ENCODE measurements at regions of chr2 and their contacts with region 1.

Region 1: GRCh38 chr2:174835797-174836255 is 71.6 kb upstream of the CHRNA1 start:
- DNase-seq: peak; percentile 67
- H3K4me3 Mint-ChIP-seq: no peak overlapping the region
- H3K27ac Mint-ChIP-seq: peak overlapping the region; percentile 82
- H3K4me1 Mint-ChIP-seq: peaks cover 36% of the 10 kb centered on the region
- H3K27me3 Mint-ChIP-seq: no peaks in the 10 kb centered on the region

Region 2: GRCh38 chr2:174778085-174778981 is 57.5 kb before region 1 on chr2:
- CTCF ChIA-PET with region 1: no interaction called
- POLR2A ChIA-PET with region 1: no interaction called
- intact Hi-C with region 1: loop called (anchors 5 kb)
- DNase-seq: peak; percentile 91
- H3K4me3 Mint-ChIP-seq: peak overlapping the region; percentile 17
- H3K27ac Mint-ChIP-seq: peak overlapping the region; percentile 79
- H3K4me1 Mint-ChIP-seq: peaks cover 42% of the 10 kb centered on the region
- H3K27me3 Mint-ChIP-seq: no peaks in the 10 kb centered on the region

Region 3: GRCh38 chr2:174797781-174798276 is 38.0 kb before region 1 on chr2:
- CTCF ChIA-PET with region 1: interaction called, 8 read pairs
- POLR2A ChIA-PET with region 1: interaction called, 19 read pairs
- intact Hi-C with region 1: loop called (anchors 1 kb)
- DNase-seq: no peak
- H3K4me3 Mint-ChIP-seq: no peak overlapping the region
- H3K27ac Mint-ChIP-seq: no peak overlapping the region
- H3K4me1 Mint-ChIP-seq: peaks cover 24% of the 10 kb centered on the region
- H3K27me3 Mint-ChIP-seq: no peaks in the 10 kb centered on the region

Region 4: DNA sequence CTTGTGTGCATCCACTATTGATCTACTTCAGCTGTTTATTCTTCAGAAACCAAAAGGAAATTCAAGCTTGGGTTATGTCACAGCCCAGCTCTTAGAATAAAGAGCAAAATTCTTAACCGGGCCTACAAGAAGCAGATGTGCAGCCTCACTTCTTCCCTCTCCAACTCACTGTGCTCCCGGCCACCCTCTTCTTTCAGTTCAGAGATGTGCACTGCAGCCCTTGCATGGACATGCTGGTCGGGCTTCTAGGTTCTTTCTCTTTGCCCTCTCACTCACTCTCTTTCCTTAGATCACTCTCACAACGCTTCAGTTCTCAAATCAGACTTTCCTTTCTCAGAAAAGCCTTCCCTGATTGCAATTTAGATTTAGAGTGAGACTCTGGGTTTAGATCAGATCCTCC is 65.2 kb after region 1 on chr2:
- CTCF ChIA-PET with region 1: no interaction called
- POLR2A ChIA-PET with region 1: no interaction called
- intact Hi-C with region 1: loop called (anchors 5 kb)
- DNase-seq: peak; percentile 43
- H3K4me3 Mint-ChIP-seq: peak overlapping the region; percentile 3
- H3K27ac Mint-ChIP-seq: peak overlapping the region; percentile 0
- H3K4me1 Mint-ChIP-seq: peaks cover 22% of the 10 kb centered on the region
- H3K27me3 Mint-ChIP-seq: no peaks in the 10 kb centered on the region

Region 5: GRCh38 chr2:174965992-174966744 is 130.3 kb after region 1 on chr2:
- CTCF ChIA-PET with region 1: no interaction called
- POLR2A ChIA-PET with region 1: no interaction called
- intact Hi-C with region 1: loop called (anchors 1 kb)
- DNase-seq: no peak
- H3K4me3 Mint-ChIP-seq: no peak overlapping the region
- H3K27ac Mint-ChIP-seq: no peak overlapping the region
- H3K4me1 Mint-ChIP-seq: peaks cover 10% of the 10 kb centered on the region
- H3K27me3 Mint-ChIP-seq: peaks cover 5% of the 10 kb centered on the region

Region 6: DNA sequence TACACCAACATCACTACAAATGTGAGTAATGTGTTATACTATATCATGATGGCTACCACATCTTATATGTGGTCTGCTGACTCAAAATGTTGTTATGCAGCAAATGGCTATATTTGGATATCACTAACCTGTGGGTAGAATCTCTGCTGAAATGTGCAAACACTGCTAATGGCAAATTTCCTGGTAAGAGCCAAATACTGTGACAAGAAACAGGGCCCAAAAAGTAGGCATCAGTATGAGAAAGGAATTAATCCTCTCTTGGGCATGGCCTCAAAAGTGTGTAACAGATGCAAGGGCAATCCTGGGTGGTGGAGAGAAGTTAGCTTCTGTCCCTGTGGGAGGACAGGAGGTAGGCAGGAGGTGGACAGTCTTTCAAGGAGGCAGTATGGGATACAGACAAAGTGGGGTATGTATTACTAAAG is 318.8 kb after region 1 on chr2:
- CTCF ChIA-PET with region 1: no interaction called
- POLR2A ChIA-PET with region 1: no interaction called
- intact Hi-C with region 1: loop called (anchors 5 kb)
- DNase-seq: no peak
- H3K4me3 Mint-ChIP-seq: no peak overlapping the region
- H3K27ac Mint-ChIP-seq: peak overlapping the region; percentile 75
- H3K4me1 Mint-ChIP-seq: peaks cover 46% of the 10 kb centered on the region
- H3K27me3 Mint-ChIP-seq: no peaks in the 10 kb centered on the region

Region 7: DNA sequence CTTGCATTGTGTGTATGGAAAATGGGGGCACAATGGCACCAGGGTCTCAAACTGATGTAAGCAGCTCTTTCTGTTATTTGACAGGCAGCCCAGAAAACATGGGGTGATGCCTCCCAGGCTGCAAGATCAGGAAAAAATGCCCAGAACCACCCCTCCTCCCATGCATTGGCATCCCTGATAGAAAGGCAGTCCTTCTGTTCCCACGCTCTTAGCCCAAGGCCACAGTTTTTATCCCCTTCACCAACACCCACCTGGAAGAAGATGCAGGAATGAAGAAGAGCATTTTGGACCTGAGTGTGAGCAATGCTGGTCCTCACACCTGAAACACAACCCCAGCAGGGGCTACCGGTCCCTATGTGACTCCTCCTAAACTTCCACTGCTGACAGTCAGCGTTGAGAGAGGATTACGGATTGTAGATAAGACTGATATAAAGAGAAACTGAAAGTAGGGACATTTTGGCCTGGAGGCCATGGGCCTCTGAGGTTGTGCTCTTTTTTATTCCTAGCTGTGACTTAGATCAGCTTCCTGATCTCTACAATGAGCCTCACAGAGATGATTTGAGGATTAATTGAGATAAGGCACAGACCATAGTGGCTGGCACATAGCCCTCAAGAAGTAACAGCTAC is 731.7 kb after region 1 on chr2:
- CTCF ChIA-PET with region 1: no interaction called
- POLR2A ChIA-PET with region 1: no interaction called
- intact Hi-C with region 1: no loop called
- DNase-seq: no peak
- H3K4me3 Mint-ChIP-seq: no peak overlapping the region
- H3K27ac Mint-ChIP-seq: no peak overlapping the region
- H3K4me1 Mint-ChIP-seq: no peaks in the 10 kb centered on the region
- H3K27me3 Mint-ChIP-seq: no peaks in the 10 kb centered on the region